AG04450 (cell line): ENCODE measurements at regions of chr16 and their contacts with region 1.

Region 1: DNA sequence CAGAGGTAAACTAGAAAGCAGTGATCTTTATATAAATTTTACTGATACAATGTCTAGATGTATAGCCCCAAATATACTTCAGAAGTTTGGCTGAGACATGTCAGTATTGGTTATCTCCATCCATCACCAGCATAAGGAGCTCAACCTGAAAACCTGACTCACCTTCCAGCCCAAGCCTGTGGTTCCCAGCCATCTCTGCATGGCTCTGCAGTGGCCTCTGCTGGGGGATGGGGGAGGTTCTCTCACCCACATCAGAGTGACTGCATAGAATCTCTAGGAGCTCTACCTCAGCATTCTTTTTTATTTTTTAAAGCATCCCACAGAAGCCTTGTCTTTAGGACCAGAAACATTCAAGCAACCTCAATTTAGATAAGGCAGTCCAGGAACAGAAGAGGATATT is 27.3 kb downstream of the USP7 start:
- DNase-seq: no peak
- H3K4me3 ChIP-seq: no peak overlapping the region
- H3K27ac ChIP-seq: no peak overlapping the region
- H3K27me3 ChIP-seq: no peaks in the 10 kb centered on the region
- CTCF ChIP-seq: peak; percentile 61

Region 2: GRCh38 chr16:8946544-8946943 is 10.1 kb after region 1 on chr16:
- CTCF ChIA-PET with region 1: interaction called, 15 read pairs
- POLR2A ChIA-PET with region 1: no interaction called
- DNase-seq: no peak
- H3K4me3 ChIP-seq: no peak overlapping the region
- H3K27ac ChIP-seq: no peak overlapping the region
- H3K27me3 ChIP-seq: no peaks in the 10 kb centered on the region
- CTCF ChIP-seq: no peak